Posterior vena cava (tissue), 2 donors: ENCODE measurements at regions of chr15 and their contacts with region 1.

Region 1: DNA sequence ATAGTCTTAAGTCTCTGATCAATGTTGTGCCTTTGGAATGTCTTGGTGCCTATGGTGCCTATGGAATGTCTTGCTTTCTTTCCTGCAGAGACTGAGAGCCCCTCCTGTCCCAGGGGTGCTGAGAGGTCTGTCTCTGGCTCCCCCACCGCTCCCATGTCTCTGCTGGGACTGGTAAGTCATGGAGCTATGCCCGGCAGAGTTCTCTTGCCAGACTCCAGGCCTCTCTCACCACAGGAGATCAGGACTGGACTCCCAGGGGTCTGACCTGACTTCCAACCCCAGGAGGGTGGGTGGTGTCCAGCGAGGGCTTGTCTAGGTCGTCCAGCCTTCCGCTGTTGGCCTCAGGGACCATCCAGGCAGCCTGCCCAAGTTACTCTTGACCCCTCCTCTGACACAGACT is 14.0 kb upstream of the CYP11A1 start:
- DNase-seq: peak; percentile 57

Region 2: DNA sequence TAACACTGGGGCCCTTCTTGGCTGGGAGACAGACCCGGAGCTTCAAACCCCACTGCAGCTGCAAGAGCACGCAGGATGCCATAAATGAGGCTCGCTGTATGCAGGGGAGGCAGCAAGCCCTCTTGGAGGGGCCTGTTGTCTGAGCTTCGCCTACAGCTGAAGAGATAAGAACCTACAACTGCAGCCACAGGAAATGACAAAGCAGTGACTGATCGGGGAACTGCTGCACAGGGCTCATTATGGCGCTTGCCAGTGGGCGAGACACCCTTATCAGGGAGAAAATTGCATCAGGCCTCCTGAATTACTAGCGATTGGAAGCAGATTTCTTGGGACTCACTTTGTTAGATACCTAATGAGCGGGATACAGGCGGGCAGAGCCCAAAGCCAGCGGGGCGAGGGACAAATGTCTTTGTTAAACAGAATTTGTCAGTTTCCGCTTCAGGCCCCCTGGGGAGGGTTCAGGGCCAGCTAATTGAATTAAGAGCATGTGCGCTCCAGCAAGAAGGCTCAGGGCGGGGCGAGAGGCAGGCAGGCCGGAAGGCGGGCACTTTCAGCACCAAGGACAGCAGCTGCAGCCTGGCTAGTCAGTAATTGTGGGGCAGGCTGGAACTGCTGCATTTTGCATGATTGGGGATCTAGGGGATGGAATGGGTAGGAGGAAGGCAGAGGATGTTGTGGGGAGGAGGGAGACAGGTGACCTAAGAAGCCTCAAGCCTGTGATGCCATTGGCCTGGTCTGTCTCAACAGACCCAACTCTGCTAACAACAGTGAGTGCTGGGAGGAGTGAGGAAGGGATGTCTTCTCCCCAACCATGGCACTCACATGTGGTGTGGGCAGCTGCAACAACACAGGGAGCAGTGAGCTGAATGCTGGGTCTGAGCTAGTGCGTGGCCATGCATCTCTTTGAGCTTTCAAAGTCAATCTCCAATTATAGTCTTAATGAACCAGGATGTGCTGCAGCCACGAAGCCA is 90.1 kb before region 1 on chr15:
- intact Hi-C with region 1: no loop called
- DNase-seq: peak; percentile 95

Region 3: DNA sequence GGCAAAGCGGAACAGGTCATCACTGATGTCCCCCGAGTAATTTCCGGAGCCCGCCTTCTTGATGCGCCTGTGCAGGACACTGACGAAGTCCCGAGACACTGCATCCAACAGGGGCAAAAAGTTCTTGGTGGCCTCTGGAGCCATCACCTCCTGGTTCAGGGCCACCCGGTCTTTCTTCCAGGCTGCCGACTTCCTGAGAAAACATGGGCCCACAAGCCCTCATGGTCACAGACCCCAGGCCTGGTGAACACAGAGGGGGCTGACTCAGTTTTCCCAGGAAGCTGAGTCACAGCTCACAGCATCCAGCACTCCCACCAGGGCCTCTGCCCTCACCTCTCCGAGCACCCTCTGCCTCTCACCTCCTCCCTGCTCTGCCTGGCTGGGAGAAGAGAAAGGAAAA is 36.4 kb before region 1 on chr15:
- intact Hi-C with region 1: loop called in 1 of 2 experiments (anchors 1 kb)
- DNase-seq: peak; percentile 58

Region 4: GRCh38 chr15:74407055-74407691 is 25.7 kb after region 1 on chr15:
- intact Hi-C with region 1: no loop called
- DNase-seq: no peak

Region 5: GRCh38 chr15:74433592-74434262 is 52.2 kb after region 1 on chr15 and contains the start of gene SEMA7A:
- intact Hi-C with region 1: loop called (anchors 2 kb)
- DNase-seq: peak; percentile 93
- total RNA-seq, gene SEMA7A: 1.2 to 2.0 TPM